Common myeloid progenitor, CD34-positive (primary cell): ENCODE measurements at regions of chr11 and their contacts with region 1.

Region 1: GRCh38 chr11:119694334-119694733 is 34.7 kb downstream of the NECTIN1 start:
- DNase-seq: peak; percentile 63 to 94 (median 90)
- H3K4me3 ChIP-seq: no peak overlapping the region
- H3K27ac ChIP-seq: no peak overlapping the region
- H3K4me1 ChIP-seq: peaks cover 2 to 58% (median 33%) of the 10 kb centered on the region in 4 experiments
- H3K27me3 ChIP-seq: peaks cover 0 to 5% (median 0%) of the 10 kb centered on the region in 5 experiments

Region 2: GRCh38 chr11:119673759-119674336 is 20.5 kb before region 1 on chr11:
- CTCF ChIA-PET with region 1: interaction called, 15 read pairs
- POLR2A ChIA-PET with region 1: interaction called, 4 read pairs
- DNase-seq: peak; percentile 48 to 86 (median 82)
- H3K4me3 ChIP-seq: peak overlapping the region in 1 of 7 experiments; percentile 23
- H3K27ac ChIP-seq: no peak overlapping the region
- H3K4me1 ChIP-seq: peaks cover 0 to 25% (median 20%) of the 10 kb centered on the region in 4 experiments
- H3K27me3 ChIP-seq: peaks cover 0 to 3% (median 0%) of the 10 kb centered on the region in 5 experiments

Region 3: GRCh38 chr11:119709638-119710346 is 15.5 kb after region 1 on chr11:
- CTCF ChIA-PET with region 1: interaction called, 22 read pairs
- POLR2A ChIA-PET with region 1: no interaction called
- DNase-seq: peak; percentile 65 to 89 (median 87)
- H3K4me3 ChIP-seq: peak overlapping the region in 1 of 7 experiments; percentile 7
- H3K27ac ChIP-seq: no peak overlapping the region
- H3K4me1 ChIP-seq: peaks cover 0 to 28% (median 20%) of the 10 kb centered on the region in 4 experiments
- H3K27me3 ChIP-seq: peaks cover 0 to 11% (median 0%) of the 10 kb centered on the region in 5 experiments